MCF 10A (cell line): ENCODE measurements at regions of chr2 and their contacts with region 1.

Region 1: DNA sequence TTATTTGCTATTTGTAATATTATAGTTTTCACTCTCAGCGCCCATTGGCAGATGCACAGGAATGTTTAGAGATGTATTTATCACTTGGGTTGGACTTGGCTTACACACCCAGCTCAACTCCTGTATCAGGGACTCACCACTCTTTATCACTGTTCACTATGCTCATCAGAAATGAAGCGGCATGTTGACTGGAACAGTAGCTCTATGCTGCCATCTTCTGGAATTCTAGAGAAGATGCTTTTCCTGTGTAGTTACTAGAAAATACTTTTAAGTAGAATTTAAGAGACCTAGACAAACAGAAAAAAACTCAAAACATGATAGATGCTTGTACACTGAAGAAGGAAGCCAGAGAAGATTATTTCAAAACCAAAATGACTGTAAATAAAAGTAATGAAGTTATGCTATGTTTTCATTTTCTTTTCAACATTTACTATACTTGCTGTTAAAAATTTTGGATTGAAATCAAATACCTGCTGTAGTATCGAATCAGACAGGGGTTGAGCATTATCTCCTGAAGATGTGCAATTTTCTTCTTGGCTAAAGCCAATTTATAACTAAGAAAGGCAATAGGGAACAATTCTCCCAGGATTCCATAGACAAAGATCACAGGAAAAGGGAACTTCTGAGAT is 47.4 kb upstream of the NXPH2 start:
- DNase-seq: peak; percentile 80
- H3K4me3 Mint-ChIP-seq: no peak overlapping the region
- H3K27ac Mint-ChIP-seq: no peak overlapping the region
- H3K4me1 Mint-ChIP-seq: no peaks in the 10 kb centered on the region
- H3K27me3 Mint-ChIP-seq: peaks cover 7% of the 10 kb centered on the region
- CTCF ChIP-seq: peak; percentile 49

Region 2: GRCh38 chr2:137888845-137889244 is 938.7 kb before region 1 on chr2:
- CTCF ChIA-PET with region 1: interaction called, 29 read pairs
- POLR2A ChIA-PET with region 1: no interaction called
- intact Hi-C with region 1: loop called (anchors 1 kb)
- DNase-seq: peak; percentile 53
- H3K4me3 Mint-ChIP-seq: no peak overlapping the region
- H3K27ac Mint-ChIP-seq: no peak overlapping the region
- H3K4me1 Mint-ChIP-seq: peaks cover 10% of the 10 kb centered on the region
- H3K27me3 Mint-ChIP-seq: no peaks in the 10 kb centered on the region
- CTCF ChIP-seq: peak; percentile 55

Region 3: DNA sequence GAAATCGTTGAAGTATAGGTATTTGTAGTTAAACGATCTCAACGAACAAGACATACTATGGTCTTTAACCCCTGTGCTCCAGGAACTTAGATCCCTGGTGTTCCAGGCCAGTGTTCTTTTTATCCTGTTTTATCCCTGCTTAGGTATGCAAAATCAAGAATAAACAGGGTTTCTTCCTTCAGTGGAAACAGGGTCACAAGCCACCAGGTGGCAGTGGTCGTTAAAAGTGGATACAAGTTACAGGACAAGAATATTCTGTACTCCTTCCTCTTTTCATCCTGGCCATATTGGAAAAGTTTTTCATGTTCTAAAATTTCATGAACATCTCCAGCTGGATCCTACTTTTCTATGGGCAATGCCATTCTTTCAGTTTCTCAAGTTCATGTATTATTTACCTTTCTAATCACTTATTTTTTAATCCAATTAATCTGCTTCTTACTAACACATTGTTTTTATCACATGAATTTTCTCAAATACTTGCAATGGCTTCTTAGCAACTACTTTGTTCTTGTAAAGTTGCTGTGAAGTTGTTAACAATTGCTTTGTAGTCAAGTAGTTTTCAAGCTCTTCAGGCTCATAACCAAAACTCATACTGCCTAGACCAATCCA is 879.7 kb before region 1 on chr2:
- CTCF ChIA-PET with region 1: interaction called, 14 read pairs
- POLR2A ChIA-PET with region 1: interaction called, 3 read pairs
- intact Hi-C with region 1: no loop called
- DNase-seq: peak; percentile 72
- H3K4me3 Mint-ChIP-seq: no peak overlapping the region
- H3K27ac Mint-ChIP-seq: no peak overlapping the region
- H3K4me1 Mint-ChIP-seq: peaks cover 11% of the 10 kb centered on the region
- H3K27me3 Mint-ChIP-seq: no peaks in the 10 kb centered on the region
- CTCF ChIP-seq: peak; percentile 57

Region 4: GRCh38 chr2:138814120-138814898 is 13.2 kb before region 1 on chr2:
- CTCF ChIA-PET with region 1: interaction called, 28 read pairs
- POLR2A ChIA-PET with region 1: no interaction called
- intact Hi-C with region 1: no loop called
- DNase-seq: peak; percentile 22
- H3K4me3 Mint-ChIP-seq: no peak overlapping the region
- H3K27ac Mint-ChIP-seq: no peak overlapping the region
- H3K4me1 Mint-ChIP-seq: no peaks in the 10 kb centered on the region
- H3K27me3 Mint-ChIP-seq: peaks cover 42% of the 10 kb centered on the region
- CTCF ChIP-seq: no peak

Region 5: DNA sequence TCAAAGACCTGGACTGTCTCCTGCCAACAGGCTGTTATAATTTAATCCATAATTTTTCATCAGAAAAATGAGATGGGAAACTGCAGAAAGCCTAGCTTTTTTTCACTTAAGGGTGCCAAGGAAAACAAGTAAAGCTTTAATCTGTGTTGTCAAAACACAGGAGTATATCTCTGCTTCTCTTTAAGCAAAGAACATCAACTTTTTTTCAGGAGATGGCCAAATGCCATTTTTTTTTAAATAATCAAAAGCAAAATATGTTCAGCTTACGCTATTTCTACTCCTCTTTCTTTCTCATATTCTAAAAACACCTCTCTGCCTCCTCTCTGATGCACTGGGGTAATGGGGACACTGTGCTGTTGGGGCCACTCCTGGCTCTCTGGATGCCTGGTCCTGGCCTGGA is 25.8 kb after region 1 on chr2:
- CTCF ChIA-PET with region 1: interaction called, 10 read pairs
- POLR2A ChIA-PET with region 1: no interaction called
- intact Hi-C with region 1: no loop called
- DNase-seq: no peak
- H3K4me3 Mint-ChIP-seq: no peak overlapping the region
- H3K27ac Mint-ChIP-seq: no peak overlapping the region
- H3K4me1 Mint-ChIP-seq: no peaks in the 10 kb centered on the region
- H3K27me3 Mint-ChIP-seq: peaks cover 18% of the 10 kb centered on the region
- CTCF ChIP-seq: no peak

Region 6: GRCh38 chr2:138902239-138902871 is 74.8 kb after region 1 on chr2:
- CTCF ChIA-PET with region 1: no interaction called
- POLR2A ChIA-PET with region 1: no interaction called
- intact Hi-C with region 1: no loop called
- DNase-seq: no peak
- H3K4me3 Mint-ChIP-seq: no peak overlapping the region
- H3K27ac Mint-ChIP-seq: no peak overlapping the region
- H3K4me1 Mint-ChIP-seq: no peaks in the 10 kb centered on the region
- H3K27me3 Mint-ChIP-seq: peaks cover 39% of the 10 kb centered on the region
- CTCF ChIP-seq: no peak